Activated T-helper 2 cell treated with anti-CD3 and anti-CD28 coated beads, Interferon-gamma antibody, Interleukin-2, Interleukin-4, amounts not matched to agents 10 μg/mL and 5 μg/mL and 100 μg/mL, durations not matched to agents 14 hours and 24 hours and 36 hours (primary cell): ENCODE measurements at regions of chr15 and their contacts with region 1.

Region 1: GRCh38 chr15:63402498-63403253 is 21.0 kb upstream of the CA12 start:
- DNase-seq: no peak
- H3K4me3 Mint-ChIP-seq: no peak overlapping the region
- H3K27ac Mint-ChIP-seq: no peak overlapping the region
- H3K4me1 Mint-ChIP-seq: peaks cover 29% of the 10 kb centered on the region
- H3K27me3 Mint-ChIP-seq: no peaks in the 10 kb centered on the region

Region 2: GRCh38 chr15:63256433-63257274 is 146.0 kb before region 1 on chr15:
- intact Hi-C with region 1: no loop called
- DNase-seq: no peak
- H3K4me3 Mint-ChIP-seq: no peak overlapping the region
- H3K27ac Mint-ChIP-seq: peak overlapping the region; percentile 42
- H3K4me1 Mint-ChIP-seq: peaks cover 18% of the 10 kb centered on the region
- H3K27me3 Mint-ChIP-seq: no peaks in the 10 kb centered on the region

Region 3: GRCh38 chr15:63288778-63289378 is 113.8 kb before region 1 on chr15:
- intact Hi-C with region 1: loop called (anchors 1 kb)
- DNase-seq: no peak
- H3K4me3 Mint-ChIP-seq: no peak overlapping the region
- H3K27ac Mint-ChIP-seq: no peak overlapping the region
- H3K4me1 Mint-ChIP-seq: peaks cover 7% of the 10 kb centered on the region
- H3K27me3 Mint-ChIP-seq: no peaks in the 10 kb centered on the region

Region 4: DNA sequence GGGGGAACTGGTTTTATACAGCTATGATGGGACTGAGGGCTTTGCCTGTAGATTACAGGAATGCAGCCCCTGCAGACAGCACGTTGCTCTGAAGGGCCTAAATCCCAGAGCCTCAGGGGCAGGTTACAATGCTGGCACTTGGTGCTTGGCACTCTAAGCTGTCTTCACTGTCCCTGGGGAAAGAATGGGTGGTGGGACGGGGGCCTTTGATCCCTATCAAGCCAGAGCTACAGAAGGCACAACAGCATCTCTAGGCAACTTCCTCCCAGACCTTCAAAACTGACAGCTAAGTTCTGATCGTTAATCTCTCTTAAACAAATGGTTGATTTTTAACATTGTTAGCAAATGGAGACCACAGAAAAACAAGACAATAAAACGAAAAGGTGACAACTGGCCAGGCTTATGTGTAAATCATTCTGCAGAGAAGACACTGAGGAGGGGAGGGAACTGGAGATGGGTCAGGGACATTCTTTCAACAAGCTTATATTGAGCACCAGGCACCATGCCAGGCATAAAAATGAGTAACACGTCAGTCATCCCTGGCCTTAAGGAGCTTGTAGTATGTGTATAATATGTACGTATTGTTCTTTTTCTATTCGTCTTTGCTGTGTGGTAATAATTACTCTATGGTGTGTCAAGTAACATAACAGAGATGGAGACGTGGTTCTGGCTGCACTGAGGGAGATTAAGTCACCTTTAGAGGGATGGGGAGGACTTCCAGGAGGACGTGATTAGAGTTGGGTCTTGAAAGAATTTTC is 70.1 kb before region 1 on chr15:
- intact Hi-C with region 1: loop called (anchors 5 kb)
- DNase-seq: no peak
- H3K4me3 Mint-ChIP-seq: no peak overlapping the region
- H3K27ac Mint-ChIP-seq: no peak overlapping the region
- H3K4me1 Mint-ChIP-seq: peaks cover 6% of the 10 kb centered on the region
- H3K27me3 Mint-ChIP-seq: peaks cover 2% of the 10 kb centered on the region